ENCODE measurements at regions of chr1 and their contacts with region 1.

Region 1: DNA sequence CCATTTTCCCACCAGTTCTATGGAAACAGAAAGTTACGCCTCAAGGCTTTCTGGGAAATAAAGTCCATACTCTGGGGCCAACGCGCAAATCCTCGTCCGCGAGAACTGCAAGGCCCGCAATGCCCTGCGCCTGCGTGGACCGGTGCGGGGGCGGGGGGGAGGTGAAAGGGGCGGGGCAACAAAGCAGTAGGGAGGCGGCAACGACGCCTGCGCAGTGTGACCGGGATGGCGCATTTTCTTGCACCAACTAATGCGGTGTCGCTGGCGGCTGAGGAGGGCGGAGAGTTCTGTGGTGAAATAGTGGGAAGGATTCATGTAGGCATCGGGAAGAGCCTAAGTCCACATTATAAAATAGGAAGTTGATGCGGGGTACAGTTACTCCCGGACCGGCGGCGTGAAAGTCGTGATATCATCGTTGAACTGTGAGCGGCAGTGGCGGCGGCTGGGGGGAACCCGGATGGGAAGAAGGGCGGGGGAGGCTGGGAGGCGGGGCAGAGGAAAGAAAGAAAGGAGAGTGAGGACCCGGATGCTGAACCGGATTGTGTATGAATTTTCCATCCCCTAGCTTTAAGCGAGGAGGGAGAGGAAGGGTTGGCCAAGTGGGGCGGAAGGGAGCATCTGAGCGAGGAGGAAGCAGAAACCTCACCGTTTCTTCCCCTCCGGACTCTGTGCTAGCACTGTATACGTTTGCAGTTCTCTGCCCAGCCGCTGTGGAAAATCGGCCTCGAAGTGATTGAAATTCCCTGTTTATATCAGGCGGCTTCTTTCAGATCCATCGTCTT is at the start of gene GGPS1:
- DNase-seq: peak; percentile 100
- H3K4me3 Mint-ChIP-seq: no peak within 1 kb of the TSS
- H3K27ac Mint-ChIP-seq: no peak within 1 kb of the TSS
- H3K4me1 Mint-ChIP-seq: peaks cover 23% of the 10 kb centered on the region
- H3K27me3 Mint-ChIP-seq: no peaks in the 10 kb centered on the region
- CTCF ChIP-seq: peak; percentile 6
- total RNA-seq, gene GGPS1: 56.5 and 74.8 TPM in 2 replicates

Region 2: GRCh38 chr1:235100194-235100772 is 228.3 kb before region 1 on chr1:
- CTCF ChIA-PET with region 1: no interaction called
- POLR2A ChIA-PET with region 1: interaction called, 3 read pairs
- intact Hi-C with region 1: loop called (anchors 5 kb)
- DNase-seq: no peak
- H3K4me3 Mint-ChIP-seq: no peak overlapping the region
- H3K27ac Mint-ChIP-seq: no peak overlapping the region
- H3K4me1 Mint-ChIP-seq: peaks cover 29% of the 10 kb centered on the region
- H3K27me3 Mint-ChIP-seq: no peaks in the 10 kb centered on the region
- CTCF ChIP-seq: no peak

Region 3: DNA sequence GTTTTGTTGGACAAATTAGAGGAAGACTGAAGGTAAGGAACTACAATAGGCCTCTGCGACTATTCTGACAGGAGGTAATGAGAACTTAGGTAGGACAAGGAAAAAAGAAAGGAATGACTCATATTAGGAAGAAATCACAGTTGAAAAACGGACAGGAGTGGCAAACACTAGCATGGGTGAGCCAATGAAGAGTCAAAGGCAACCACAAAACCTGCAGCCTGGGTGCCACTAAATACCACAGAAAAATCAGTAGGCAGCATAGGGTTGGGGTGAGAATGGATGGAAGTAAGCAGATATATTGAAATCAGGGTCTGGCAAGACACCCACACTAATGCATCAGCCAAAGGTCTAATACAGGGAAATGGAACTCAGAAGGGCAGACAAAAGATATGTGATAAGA is 177.5 kb before region 1 on chr1:
- CTCF ChIA-PET with region 1: no interaction called
- POLR2A ChIA-PET with region 1: no interaction called
- intact Hi-C with region 1: no loop called
- DNase-seq: no peak
- H3K4me3 Mint-ChIP-seq: no peak overlapping the region
- H3K27ac Mint-ChIP-seq: peak overlapping the region; percentile 5
- H3K4me1 Mint-ChIP-seq: peaks cover 12% of the 10 kb centered on the region
- H3K27me3 Mint-ChIP-seq: no peaks in the 10 kb centered on the region
- CTCF ChIP-seq: no peak

Region 4: DNA sequence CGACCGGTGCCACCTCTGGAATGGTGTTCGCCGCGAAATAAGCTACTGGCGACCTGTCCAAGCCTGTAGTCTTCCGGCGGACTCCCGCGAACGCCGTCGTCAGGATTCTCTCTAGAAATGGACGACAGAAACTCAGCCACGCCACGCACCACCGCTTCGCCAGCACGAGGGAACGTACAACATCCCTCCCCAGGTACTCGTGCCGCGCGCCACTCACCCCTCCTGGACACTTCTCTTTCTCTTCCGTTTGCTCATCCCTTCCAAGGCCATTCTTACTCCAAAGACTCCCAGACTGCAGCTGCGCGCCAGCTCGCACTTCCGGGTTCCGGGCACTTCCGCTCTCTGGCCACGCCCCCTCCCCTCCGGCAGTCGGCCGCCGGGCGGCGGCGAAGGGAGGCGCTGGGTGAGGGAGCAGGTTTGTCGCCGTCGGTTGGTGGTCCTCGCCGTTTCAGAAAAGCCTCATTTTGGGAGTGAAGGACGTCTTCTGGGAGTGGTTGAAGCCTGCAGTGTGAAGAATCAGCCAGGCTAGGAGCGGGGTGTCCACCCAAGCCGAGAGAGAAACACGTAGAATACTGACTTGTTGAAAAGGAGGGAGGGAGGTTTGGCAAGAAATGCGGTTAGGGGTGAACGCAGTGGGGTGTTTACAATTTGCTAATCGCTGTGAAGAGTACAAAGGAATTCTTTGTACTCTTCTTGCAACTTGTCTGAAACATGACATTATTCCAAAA is 167.4 kb before region 1 on chr1 and contains the start of gene RBM34:
- CTCF ChIA-PET with region 1: no interaction called
- POLR2A ChIA-PET with region 1: interaction called, 16 read pairs
- intact Hi-C with region 1: loop called (anchors 2 kb)
- DNase-seq: peak; percentile 97
- H3K4me3 Mint-ChIP-seq: peak within 1 kb of the TSS; percentile 84
- H3K27ac Mint-ChIP-seq: peak within 1 kb of the TSS; percentile 95
- H3K4me1 Mint-ChIP-seq: peaks cover 14% of the 10 kb centered on the region
- H3K27me3 Mint-ChIP-seq: no peaks in the 10 kb centered on the region
- CTCF ChIP-seq: no peak
- total RNA-seq, gene RBM34: 150 and 184 TPM in 2 replicates

Region 5: DNA sequence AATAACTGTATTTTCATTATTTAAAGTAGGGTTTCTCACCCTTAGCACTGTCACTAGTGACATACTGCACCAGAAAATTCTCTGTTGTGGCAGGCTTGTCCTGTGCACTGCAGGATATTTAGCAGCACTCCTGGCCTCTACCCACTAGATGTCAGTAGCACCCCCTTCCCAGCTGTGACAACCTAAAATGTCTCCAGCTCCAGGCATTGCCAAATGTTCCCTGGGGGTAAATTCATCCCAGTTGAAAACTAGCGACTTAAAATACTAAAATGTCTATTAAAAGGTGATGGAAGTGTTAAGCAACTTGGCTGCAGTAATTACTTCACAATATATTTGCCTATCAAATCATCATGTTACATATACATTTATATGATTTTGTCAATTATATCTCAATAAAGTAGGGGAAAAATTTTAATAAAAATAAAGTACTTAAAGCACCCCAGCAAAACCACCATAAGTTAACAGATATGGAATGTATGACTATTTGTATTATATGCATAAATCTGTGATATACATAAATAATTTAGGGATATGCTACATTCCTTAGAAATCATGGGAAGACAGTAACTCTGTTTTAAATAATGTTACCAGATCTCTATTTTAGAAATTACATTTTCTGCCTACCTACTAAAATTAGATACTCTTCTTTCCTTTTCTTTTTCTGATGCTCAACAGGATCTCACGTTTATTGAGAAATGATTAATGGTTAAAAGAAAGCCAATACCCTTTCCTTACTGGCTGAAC is 75.2 kb before region 1 on chr1:
- CTCF ChIA-PET with region 1: interaction called, 5 read pairs
- POLR2A ChIA-PET with region 1: interaction called, 33 read pairs
- intact Hi-C with region 1: loop called (anchors 1 kb)
- DNase-seq: peak; percentile 95
- H3K4me3 Mint-ChIP-seq: no peak overlapping the region
- H3K27ac Mint-ChIP-seq: peak overlapping the region; percentile 49
- H3K4me1 Mint-ChIP-seq: peaks cover 10% of the 10 kb centered on the region
- H3K27me3 Mint-ChIP-seq: no peaks in the 10 kb centered on the region
- CTCF ChIP-seq: peak; percentile 98

Region 6: GRCh38 chr1:235275223-235275622 is 53.3 kb before region 1 on chr1:
- CTCF ChIA-PET with region 1: interaction called, 4 read pairs
- POLR2A ChIA-PET with region 1: interaction called, 12 read pairs
- intact Hi-C with region 1: no loop called
- DNase-seq: no peak
- H3K4me3 Mint-ChIP-seq: no peak overlapping the region
- H3K27ac Mint-ChIP-seq: no peak overlapping the region
- H3K4me1 Mint-ChIP-seq: peaks cover 43% of the 10 kb centered on the region
- H3K27me3 Mint-ChIP-seq: no peaks in the 10 kb centered on the region
- CTCF ChIP-seq: no peak

Region 7: GRCh38 chr1:235339746-235340445 is 11.3 kb after region 1 on chr1:
- CTCF ChIA-PET with region 1: interaction called, 14 read pairs
- POLR2A ChIA-PET with region 1: interaction called, 72 read pairs
- intact Hi-C with region 1: no loop called
- DNase-seq: peak; percentile 16
- H3K4me3 Mint-ChIP-seq: no peak overlapping the region
- H3K27ac Mint-ChIP-seq: no peak overlapping the region
- H3K4me1 Mint-ChIP-seq: peaks cover 6% of the 10 kb centered on the region
- H3K27me3 Mint-ChIP-seq: no peaks in the 10 kb centered on the region
- CTCF ChIP-seq: no peak

Region 8: DNA sequence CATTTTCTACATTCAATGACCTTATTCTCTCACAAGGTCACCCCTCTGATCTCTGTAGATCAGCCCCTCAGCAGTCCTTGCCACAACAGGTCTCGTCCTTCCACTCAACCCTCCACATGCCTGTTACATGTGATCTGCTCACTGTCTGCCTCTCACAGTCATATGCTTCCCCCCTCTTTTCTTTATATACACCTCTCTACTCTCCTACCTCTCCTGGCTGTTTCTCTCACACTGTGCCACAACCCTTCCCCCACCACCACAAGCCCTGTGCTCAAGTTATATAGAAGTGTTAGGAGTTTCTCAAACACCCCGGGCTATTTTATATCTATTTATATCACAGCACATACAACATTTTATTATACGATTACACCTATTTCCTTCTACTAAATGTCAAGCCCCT is 163.1 kb after region 1 on chr1:
- CTCF ChIA-PET with region 1: no interaction called
- POLR2A ChIA-PET with region 1: no interaction called
- intact Hi-C with region 1: no loop called
- DNase-seq: no peak
- H3K4me3 Mint-ChIP-seq: no peak overlapping the region
- H3K27ac Mint-ChIP-seq: peak overlapping the region; percentile 8
- H3K4me1 Mint-ChIP-seq: peaks cover 4% of the 10 kb centered on the region
- H3K27me3 Mint-ChIP-seq: no peaks in the 10 kb centered on the region
- CTCF ChIP-seq: no peak

Region 9: GRCh38 chr1:235855811-235856429 is 527.4 kb after region 1 on chr1:
- CTCF ChIA-PET with region 1: no interaction called
- POLR2A ChIA-PET with region 1: no interaction called
- intact Hi-C with region 1: no loop called
- DNase-seq: no peak
- H3K4me3 Mint-ChIP-seq: no peak overlapping the region
- H3K27ac Mint-ChIP-seq: no peak overlapping the region
- H3K4me1 Mint-ChIP-seq: peaks cover 20% of the 10 kb centered on the region
- H3K27me3 Mint-ChIP-seq: no peaks in the 10 kb centered on the region
- CTCF ChIP-seq: no peak

Region 10: GRCh38 chr1:236193184-236193583 is 864.6 kb after region 1 on chr1:
- CTCF ChIA-PET with region 1: no interaction called
- POLR2A ChIA-PET with region 1: no interaction called
- intact Hi-C with region 1: no loop called
- DNase-seq: no peak
- H3K4me3 Mint-ChIP-seq: no peak overlapping the region
- H3K27ac Mint-ChIP-seq: no peak overlapping the region
- H3K4me1 Mint-ChIP-seq: no peaks in the 10 kb centered on the region
- H3K27me3 Mint-ChIP-seq: no peaks in the 10 kb centered on the region
- CTCF ChIP-seq: no peak